Naive thymus-derived CD4-positive, alpha-beta T cell (primary cell): ENCODE measurements at regions of chr10 and their contacts with region 1.

Region 1: GRCh38 chr10:93496322-93497041 is at the start of gene CEP55:
- DNase-seq: peak; percentile 90 to 97 (median 94)
- ATAC-seq: peak; percentile 100
- H3K4me3 ChIP-seq: peak within 1 kb of the TSS; percentile 100
- H3K4me3 Mint-ChIP-seq: peak within 1 kb of the TSS; percentile 84 to 95 (median 92)
- H3K27ac ChIP-seq: no peak within 1 kb of the TSS
- H3K27ac Mint-ChIP-seq: peak within 1 kb of the TSS in 8 of 9 donors; percentile 13 to 90 (median 72)
- H3K4me1 ChIP-seq: peaks cover 7 to 11% of the 10 kb centered on the region in 2 donors
- H3K4me1 Mint-ChIP-seq: peaks cover 0 to 48% (median 12%) of the 10 kb centered on the region in 7 donors
- H3K27me3 ChIP-seq: no peaks in the 10 kb centered on the region
- H3K27me3 Mint-ChIP-seq: peaks cover 0 to 9% (median 7%) of the 10 kb centered on the region in 5 donors
- total RNA-seq, gene CEP55: 0.54 to 48.6 TPM in 2 of 5 experiments, not detected in the others

Region 2: DNA sequence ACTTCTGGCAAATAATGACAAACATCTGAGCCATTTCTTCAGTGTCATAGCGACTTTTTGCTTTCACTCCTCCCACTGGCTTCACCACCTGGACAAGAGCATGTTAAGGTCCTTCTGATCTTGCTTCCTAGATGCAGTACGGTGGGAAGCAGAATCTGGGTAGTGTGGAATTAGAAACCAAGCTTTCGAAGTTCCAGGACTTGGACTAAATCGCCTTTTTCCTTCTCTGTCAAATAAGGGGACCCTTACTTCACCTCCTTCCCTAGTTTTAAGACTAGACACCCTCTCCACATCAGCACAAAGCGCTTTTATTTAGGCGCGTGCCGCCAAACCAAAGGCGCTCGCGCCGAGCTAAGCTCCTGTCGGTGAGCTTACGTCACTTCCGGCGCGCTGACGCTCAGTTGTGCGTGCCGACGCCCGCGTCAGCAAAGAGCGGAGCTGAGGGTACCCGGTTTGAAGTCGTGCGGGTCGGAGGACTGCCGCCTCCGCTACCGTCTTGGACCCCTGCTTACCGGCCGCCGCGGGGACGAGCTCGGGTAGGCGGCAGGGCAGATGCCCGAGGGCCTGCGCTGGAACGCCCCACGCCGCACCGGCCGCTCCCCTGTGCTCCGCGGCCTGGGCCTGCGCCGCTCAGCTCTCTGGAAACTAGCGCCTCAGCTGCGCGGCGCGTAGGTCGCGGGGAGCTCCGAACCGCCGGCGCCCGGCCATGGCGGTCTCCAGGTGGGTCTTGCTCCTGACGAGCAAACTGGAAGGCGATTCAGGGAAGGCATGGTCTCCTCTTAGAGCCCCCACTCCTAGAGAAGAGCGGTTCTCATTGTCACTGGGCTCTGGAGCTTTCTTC is 1572.9 kb before region 1 on chr10 and contains the start of gene BTAF1:
- CTCF ChIA-PET with region 1: no interaction called
- POLR2A ChIA-PET with region 1: no interaction called
- intact Hi-C with region 1: loop called in 1 of 2 experiments (anchors 5 kb)
- DNase-seq: peak; percentile 86 to 93 (median 91)
- ATAC-seq: peak; percentile 97
- H3K4me3 ChIP-seq: peak within 1 kb of the TSS; percentile 70
- H3K4me3 Mint-ChIP-seq: peak within 1 kb of the TSS; percentile 91 to 100 (median 96)
- H3K27ac ChIP-seq: peak within 1 kb of the TSS; percentile 96
- H3K27ac Mint-ChIP-seq: peak within 1 kb of the TSS; percentile 97 to 99 (median 98)
- H3K4me1 ChIP-seq: peaks cover 9 to 25% of the 10 kb centered on the region in 2 donors
- H3K4me1 Mint-ChIP-seq: peaks cover 22 to 62% (median 45%) of the 10 kb centered on the region in 7 donors
- H3K27me3 ChIP-seq: no peaks in the 10 kb centered on the region
- H3K27me3 Mint-ChIP-seq: peaks cover under 1 to 8% (median 5%) of the 10 kb centered on the region in 5 donors
- total RNA-seq, gene BTAF1: 55.7 to 84.8 (median 78.5) TPM

Region 3: DNA sequence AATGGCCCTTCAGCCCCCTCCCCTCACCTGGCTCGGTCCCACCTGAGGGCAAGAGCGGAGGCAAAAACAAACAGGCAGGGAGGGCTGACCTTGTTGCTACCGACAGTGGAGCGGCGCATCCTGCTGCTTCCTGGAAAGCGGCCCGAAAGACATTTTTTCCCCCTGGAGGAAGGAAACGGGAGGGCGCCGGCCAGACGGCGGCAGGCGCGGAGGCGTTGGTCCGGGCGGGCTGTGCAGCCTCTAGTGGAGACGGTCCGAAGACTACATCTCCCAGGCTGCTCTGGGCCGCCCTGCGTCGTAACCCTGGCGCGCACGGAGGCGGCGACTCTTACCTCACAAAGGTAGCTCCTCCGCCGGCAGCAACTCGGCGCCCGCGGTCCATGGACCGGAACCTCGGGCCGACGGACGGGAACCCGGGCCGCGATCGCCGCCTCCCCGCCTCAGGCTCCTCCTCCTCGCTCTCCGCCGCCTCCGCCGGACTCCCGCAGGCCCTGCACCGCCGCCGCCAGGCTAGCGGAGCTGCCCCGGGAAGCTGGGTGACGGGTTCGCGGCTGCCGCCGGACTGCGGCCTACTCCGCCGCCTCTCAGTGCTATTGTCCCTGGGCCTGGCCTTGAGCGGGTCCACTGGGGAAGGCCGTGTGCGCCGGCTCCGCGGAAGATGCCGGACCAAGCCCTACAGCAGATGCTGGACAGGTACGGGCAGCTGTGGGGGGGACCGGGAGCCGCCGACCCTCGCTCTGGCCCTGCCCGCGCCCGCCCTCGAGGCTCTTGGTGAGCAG is 1205.5 kb before region 1 on chr10 and contains the starts of genes CPEB3 and MARCHF5:
- CTCF ChIA-PET with region 1: no interaction called
- POLR2A ChIA-PET with region 1: interaction called, 3 read pairs
- intact Hi-C with region 1: loop called in 1 of 2 experiments (anchors 5 kb)
- DNase-seq: peak; percentile 77 to 92 (median 85)
- ATAC-seq: peak; percentile 99
- H3K4me3 ChIP-seq: peak within 1 kb of the TSS; percentile 90
- H3K4me3 Mint-ChIP-seq: peak within 1 kb of the TSS; percentile 85 to 97 (median 95)
- H3K27ac ChIP-seq: peak within 1 kb of the TSS; percentile 90
- H3K27ac Mint-ChIP-seq: peak within 1 kb of the TSS; percentile 75 to 96 (median 88)
- H3K4me1 ChIP-seq: peaks cover 0 to 6% of the 10 kb centered on the region in 2 donors
- H3K4me1 Mint-ChIP-seq: peaks cover 21 to 41% (median 31%) of the 10 kb centered on the region in 7 donors
- H3K27me3 ChIP-seq: no peaks in the 10 kb centered on the region
- H3K27me3 Mint-ChIP-seq: no peaks in the 10 kb centered on the region
- total RNA-seq, gene CPEB3: 2.0 to 3.3 (median 2.2) TPM
- total RNA-seq, gene MARCHF5: 22.0 to 37.1 (median 33.8) TPM

Region 4: GRCh38 chr10:93319896-93320295 is 176.6 kb before region 1 on chr10:
- CTCF ChIA-PET with region 1: no interaction called
- POLR2A ChIA-PET with region 1: no interaction called
- intact Hi-C with region 1: no loop called
- DNase-seq: no peak
- ATAC-seq: no peak
- H3K4me3 ChIP-seq: no peak overlapping the region
- H3K4me3 Mint-ChIP-seq: no peak overlapping the region
- H3K27ac ChIP-seq: no peak overlapping the region
- H3K27ac Mint-ChIP-seq: no peak overlapping the region
- H3K4me1 ChIP-seq: no peaks in the 10 kb centered on the region
- H3K4me1 Mint-ChIP-seq: peaks cover 0 to 7% (median 0%) of the 10 kb centered on the region in 7 donors
- H3K27me3 ChIP-seq: no peaks in the 10 kb centered on the region
- H3K27me3 Mint-ChIP-seq: peaks cover 0 to 13% (median 0%) of the 10 kb centered on the region in 5 donors

Region 5: DNA sequence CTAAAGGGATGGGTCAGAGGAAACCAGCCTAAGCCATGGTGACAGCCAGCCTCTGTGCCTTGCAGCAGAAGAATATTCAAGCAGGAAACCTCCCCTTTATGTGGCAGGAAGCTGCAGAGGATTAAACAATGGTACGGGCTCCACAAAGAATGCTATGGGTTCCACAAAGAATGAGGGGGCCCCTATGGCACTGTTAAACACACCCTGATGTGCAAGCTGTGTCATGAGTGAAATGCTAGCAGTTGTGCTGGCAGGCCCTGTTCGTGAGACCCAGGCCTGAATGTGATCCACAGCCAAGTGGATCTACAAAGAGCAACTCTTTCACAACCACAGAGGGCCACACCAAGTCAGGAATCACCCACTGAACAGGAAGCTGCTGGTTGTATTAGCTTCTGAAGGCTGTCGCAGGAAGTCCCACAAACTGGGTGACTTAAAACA is 83.2 kb before region 1 on chr10:
- CTCF ChIA-PET with region 1: no interaction called
- POLR2A ChIA-PET with region 1: no interaction called
- intact Hi-C with region 1: loop called in 1 of 2 experiments (anchors 1 kb)
- DNase-seq: peak in 8 of 9 donors; percentile 28 to 77 (median 70)
- ATAC-seq: peak; percentile 86
- H3K4me3 ChIP-seq: peak overlapping the region; percentile 7
- H3K4me3 Mint-ChIP-seq: peak overlapping the region; percentile 48 to 81 (median 72)
- H3K27ac ChIP-seq: peak overlapping the region; percentile 4
- H3K27ac Mint-ChIP-seq: peak overlapping the region; percentile 81 to 94 (median 89)
- H3K4me1 ChIP-seq: peaks cover 26 to 66% of the 10 kb centered on the region in 2 donors
- H3K4me1 Mint-ChIP-seq: peaks cover 48 to 83% (median 76%) of the 10 kb centered on the region in 7 donors
- H3K27me3 ChIP-seq: no peaks in the 10 kb centered on the region
- H3K27me3 Mint-ChIP-seq: no peaks in the 10 kb centered on the region

Region 6: GRCh38 chr10:93515071-93516005 is 18.9 kb after region 1 on chr10:
- CTCF ChIA-PET with region 1: interaction called, 6 read pairs
- POLR2A ChIA-PET with region 1: no interaction called
- intact Hi-C with region 1: loop called in 1 of 2 experiments (anchors 1 kb)
- DNase-seq: no peak
- ATAC-seq: peak; percentile 67
- H3K4me3 ChIP-seq: no peak overlapping the region
- H3K4me3 Mint-ChIP-seq: no peak overlapping the region
- H3K27ac ChIP-seq: no peak overlapping the region
- H3K27ac Mint-ChIP-seq: no peak overlapping the region
- H3K4me1 ChIP-seq: no peaks in the 10 kb centered on the region
- H3K4me1 Mint-ChIP-seq: peaks cover 0 to 5% (median 0%) of the 10 kb centered on the region in 7 donors
- H3K27me3 ChIP-seq: no peaks in the 10 kb centered on the region
- H3K27me3 Mint-ChIP-seq: no peaks in the 10 kb centered on the region

Region 7: DNA sequence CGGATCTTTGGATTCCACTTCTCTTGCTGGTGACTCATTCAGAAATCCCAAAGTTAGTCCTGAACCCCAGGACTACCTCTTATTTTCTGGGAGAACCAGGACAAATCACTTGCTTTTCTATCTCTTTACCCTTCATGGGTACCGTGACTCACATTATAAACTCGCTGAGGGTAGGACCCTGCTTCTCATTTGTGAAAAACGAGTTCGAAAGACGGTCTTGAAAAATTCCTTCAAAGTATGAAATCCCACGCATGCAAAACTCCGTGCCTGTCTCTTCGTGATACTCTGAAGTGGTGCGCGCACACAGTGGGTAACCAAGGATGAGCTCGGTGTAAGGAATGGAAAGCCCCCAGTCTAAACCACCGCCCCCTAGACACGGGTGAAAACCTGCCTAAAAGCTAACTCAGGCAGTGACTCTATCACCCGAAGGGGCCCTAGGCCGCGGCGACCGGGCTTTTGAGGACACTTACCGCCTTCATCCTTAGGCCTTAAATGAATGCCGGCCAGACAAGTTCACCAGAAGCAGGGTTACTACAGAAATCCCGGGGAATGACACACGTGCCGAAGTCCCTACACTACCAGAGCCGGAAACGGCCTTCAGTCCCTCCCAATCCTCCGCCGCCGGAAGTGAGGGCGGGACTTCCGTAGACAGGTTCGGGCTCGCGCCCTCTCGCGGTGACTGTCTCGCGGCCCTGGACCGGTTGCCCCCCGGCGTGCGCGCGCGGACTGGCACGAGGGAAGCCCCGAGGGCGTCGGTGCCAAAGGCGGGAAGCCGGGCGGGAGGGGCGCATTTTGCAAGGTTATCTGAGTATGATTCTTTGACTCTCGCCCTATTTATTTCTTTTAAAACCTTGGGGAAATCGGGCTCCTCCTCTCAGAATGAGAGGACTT is 866.1 kb after region 1 on chr10 and contains the start of gene NOC3L:
- CTCF ChIA-PET with region 1: no interaction called
- POLR2A ChIA-PET with region 1: no interaction called
- intact Hi-C with region 1: loop called (anchors 1 to 5 kb)
- DNase-seq: peak; percentile 85 to 96 (median 91)
- ATAC-seq: peak; percentile 97
- H3K4me3 ChIP-seq: peak within 1 kb of the TSS; percentile 76
- H3K4me3 Mint-ChIP-seq: peak within 1 kb of the TSS; percentile 93 to 98 (median 96)
- H3K27ac ChIP-seq: peak within 1 kb of the TSS; percentile 92
- H3K27ac Mint-ChIP-seq: peak within 1 kb of the TSS; percentile 90 to 99 (median 97)
- H3K4me1 ChIP-seq: peaks cover 13 to 18% of the 10 kb centered on the region in 2 donors
- H3K4me1 Mint-ChIP-seq: peaks cover 20 to 54% (median 42%) of the 10 kb centered on the region in 7 donors
- H3K27me3 ChIP-seq: no peaks in the 10 kb centered on the region
- H3K27me3 Mint-ChIP-seq: peaks cover 0 to 14% (median 9%) of the 10 kb centered on the region in 5 donors
- total RNA-seq, gene NOC3L: 8.6 to 28.8 (median 24.8) TPM